ENCODE measurements at regions of chr2 and their contacts with region 1.

Region 1: DNA sequence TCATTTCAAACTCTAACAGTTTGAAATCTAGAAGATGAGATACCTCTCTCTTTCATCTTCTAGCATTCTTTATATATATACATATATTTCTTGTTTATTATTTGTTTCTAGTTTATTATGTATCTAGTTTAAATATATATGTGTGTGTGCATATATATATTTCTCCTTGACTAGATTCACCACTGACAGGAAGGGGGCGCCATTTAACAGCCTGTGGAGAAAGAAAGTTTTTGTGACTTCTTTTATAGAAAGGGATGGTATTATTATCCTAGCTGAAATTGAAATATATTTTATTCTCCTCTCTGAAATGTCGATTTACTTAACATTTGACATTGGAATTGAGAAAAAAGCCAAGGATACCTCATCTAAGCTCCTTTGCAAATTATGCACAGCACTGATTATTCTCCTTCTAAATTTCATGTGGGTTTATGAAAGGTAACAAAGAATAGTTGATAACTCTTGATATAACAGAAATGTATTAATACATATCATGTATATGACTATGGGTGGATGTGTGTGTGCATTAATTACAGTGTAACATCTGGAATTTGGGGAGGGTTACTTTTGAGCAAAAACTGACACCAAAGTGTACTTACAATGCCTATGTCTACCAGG is 160.7 kb upstream of the NT5C1B start:
- DNase-seq: peak in 2 of 3 donors; percentile 47 to 56
- ATAC-seq: no peak
- H3K4me3 ChIP-seq: no peak overlapping the region
- H3K27ac ChIP-seq: no peak overlapping the region
- H3K4me1 ChIP-seq: no peaks in the 10 kb centered on the region
- H3K27me3 ChIP-seq: no peaks in the 10 kb centered on the region

Region 2: DNA sequence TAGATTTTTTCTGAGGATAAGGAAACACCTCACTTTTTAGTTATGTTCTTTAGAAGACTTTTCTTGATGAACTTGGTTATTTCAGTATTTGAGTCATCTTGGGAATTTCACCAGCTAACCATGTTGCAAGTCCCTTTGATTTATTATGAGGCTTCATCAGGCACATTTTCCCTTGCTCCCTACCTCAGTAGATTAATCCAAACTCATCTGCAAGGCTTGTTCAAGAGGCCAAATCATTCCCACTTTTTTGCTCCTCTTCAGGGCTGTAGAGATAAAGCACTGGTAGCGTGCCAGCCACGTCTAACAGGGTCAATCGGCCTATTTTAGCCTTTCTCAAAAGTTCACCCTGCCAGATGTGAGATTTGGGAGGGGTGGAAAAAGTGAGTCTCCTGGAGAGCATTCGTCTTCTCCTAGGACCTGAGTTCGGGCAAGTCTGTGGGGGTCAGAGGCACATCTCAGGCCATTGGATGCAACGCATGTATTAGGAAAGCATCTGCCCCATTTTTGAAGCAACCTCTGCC is 309.8 kb before region 1 on chr2:
- intact Hi-C with region 1: loop called in 1 of 4 experiments (anchors 10 kb)
- DNase-seq: no peak
- ATAC-seq: no peak
- H3K4me3 ChIP-seq: no peak overlapping the region
- H3K27ac ChIP-seq: no peak overlapping the region
- H3K4me1 ChIP-seq: peaks cover 2% of the 10 kb centered on the region
- H3K27me3 ChIP-seq: no peaks in the 10 kb centered on the region

Region 3: DNA sequence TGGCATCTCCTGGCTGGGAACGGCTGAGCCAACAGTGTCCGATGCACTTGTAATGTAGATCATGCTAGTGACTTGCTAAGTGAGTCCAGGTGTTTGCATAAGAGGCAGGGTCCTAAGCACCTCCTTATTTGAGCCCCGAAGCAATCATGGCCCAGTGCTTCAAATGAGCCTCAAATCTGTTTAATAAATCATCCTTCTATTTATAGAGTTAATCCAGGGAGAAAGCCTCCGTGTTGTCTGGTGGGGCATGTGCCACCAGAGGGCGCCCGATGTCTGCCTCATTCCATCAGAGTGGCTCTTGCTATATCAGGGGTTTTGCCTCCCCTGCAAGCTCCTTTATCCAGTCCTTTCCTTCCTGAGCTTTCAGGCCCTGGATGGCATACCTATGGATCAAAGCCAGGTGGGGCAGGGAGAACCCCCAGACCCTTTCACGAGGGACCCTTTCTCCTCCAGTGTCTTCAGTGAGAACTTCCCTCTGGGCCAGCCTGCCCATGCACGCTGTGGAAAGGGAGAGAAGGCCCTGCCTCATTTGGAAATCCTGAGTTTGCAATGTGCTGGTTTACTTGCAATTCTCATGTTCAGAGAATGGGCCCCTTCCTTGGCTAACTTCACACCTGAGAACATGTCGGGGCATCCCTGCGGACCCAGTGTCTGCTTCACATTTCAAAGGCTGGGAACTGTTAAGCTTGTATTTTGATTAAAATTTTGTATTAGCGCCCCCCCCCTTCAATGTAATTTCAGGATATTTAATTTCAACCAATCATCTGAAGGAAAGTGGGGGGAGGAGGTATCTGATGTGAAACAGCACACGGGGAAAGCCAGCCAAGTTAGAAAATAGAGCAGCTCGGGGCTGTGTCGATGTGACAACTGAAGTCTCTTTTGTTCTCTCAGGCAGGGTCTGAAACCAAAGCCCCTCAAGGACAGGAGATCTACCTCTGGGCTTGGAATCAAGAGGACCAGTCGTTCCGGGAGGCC is 229.3 kb before region 1 on chr2:
- intact Hi-C with region 1: loop called in 2 of 4 experiments (anchors 10 kb)
- DNase-seq: peak; percentile 86 to 95 (median 93)
- ATAC-seq: peak; percentile 84 to 89
- H3K4me3 ChIP-seq: no peak overlapping the region
- H3K27ac ChIP-seq: peak overlapping the region; percentile 84
- H3K4me1 ChIP-seq: no peaks in the 10 kb centered on the region
- H3K27me3 ChIP-seq: no peaks in the 10 kb centered on the region

Measured in right cardiac atrium (tissue), 5 donors.